Naive thymus-derived CD4-positive, alpha-beta T cell (primary cell): ENCODE measurements at regions of chr1 and their contacts with region 1.

Region 1: DNA sequence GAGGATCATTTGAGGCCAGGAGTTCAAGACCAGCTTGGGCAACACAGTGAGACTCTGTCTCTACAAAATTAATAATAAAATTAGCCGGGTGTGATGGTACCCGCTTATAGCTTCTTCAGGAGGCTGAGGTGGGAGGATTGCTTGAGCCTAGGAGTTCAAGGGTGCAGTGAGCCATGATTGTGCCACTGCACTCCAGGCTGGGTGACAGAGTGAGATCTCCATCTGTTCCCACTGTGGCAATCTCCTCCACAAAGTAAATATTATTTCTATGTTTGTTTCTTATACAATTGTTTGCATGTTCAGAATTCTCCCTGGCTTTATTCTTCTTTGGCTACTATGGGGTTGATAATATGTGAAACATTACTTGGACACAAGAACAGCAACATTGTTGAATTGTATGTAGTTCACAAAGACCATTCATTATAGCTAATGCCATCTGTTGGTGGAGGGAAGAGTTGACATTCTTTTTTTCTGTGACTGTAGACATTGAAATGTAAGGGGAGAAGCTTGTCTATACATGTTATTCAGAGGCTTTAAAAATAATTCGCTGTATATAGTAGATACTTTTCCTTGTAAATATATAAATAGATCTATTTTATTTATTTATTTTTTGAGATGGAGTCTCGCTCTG is 47.8 kb upstream of the SRSF10 start:
- DNase-seq: peak in 6 of 9 donors; percentile 4 to 45 (median 26)
- ATAC-seq: no peak
- H3K4me3 ChIP-seq: no peak overlapping the region
- H3K4me3 Mint-ChIP-seq: no peak overlapping the region
- H3K27ac ChIP-seq: no peak overlapping the region
- H3K27ac Mint-ChIP-seq: no peak overlapping the region
- H3K4me1 ChIP-seq: no peaks in the 10 kb centered on the region
- H3K4me1 Mint-ChIP-seq: peaks cover 0 to 8% (median 2%) of the 10 kb centered on the region in 7 donors
- H3K27me3 ChIP-seq: no peaks in the 10 kb centered on the region
- H3K27me3 Mint-ChIP-seq: peaks cover 0 to 2% (median 0%) of the 10 kb centered on the region in 5 donors

Region 2: GRCh38 chr1:23951571-23952095 is 76.3 kb before region 1 on chr1:
- CTCF ChIA-PET with region 1: no interaction called
- POLR2A ChIA-PET with region 1: no interaction called
- intact Hi-C with region 1: loop called in 1 of 2 experiments (anchors 1 kb)
- DNase-seq: no peak
- ATAC-seq: no peak
- H3K4me3 ChIP-seq: no peak overlapping the region
- H3K4me3 Mint-ChIP-seq: no peak overlapping the region
- H3K27ac ChIP-seq: no peak overlapping the region
- H3K27ac Mint-ChIP-seq: no peak overlapping the region
- H3K4me1 ChIP-seq: peaks cover 0 to 14% of the 10 kb centered on the region in 2 donors
- H3K4me1 Mint-ChIP-seq: peaks cover 8 to 25% (median 17%) of the 10 kb centered on the region in 7 donors
- H3K27me3 ChIP-seq: no peaks in the 10 kb centered on the region
- H3K27me3 Mint-ChIP-seq: peaks cover 0 to 7% (median 0%) of the 10 kb centered on the region in 5 donors

Region 3: DNA sequence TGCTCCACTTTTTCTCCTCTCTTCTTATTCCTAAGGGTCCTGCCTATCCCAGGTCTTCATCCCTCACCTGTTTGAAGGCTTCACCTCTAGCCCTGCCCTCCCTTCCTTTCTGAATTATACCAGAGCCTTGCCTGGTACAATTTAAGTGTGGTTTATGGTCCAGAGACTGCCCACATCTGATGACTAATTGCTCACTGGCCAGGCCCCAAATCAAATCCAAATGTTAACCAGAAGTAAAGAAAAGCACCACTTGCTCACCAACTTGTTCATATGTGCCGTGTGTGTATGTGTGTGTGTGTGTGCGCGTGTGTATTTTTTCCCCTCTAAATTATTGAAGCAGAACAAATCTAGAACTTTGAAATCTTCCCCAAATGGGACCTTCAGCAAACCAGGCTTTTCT is 57.6 kb after region 1 on chr1:
- CTCF ChIA-PET with region 1: no interaction called
- POLR2A ChIA-PET with region 1: no interaction called
- intact Hi-C with region 1: no loop called
- DNase-seq: no peak
- ATAC-seq: no peak
- H3K4me3 ChIP-seq: no peak overlapping the region
- H3K4me3 Mint-ChIP-seq: no peak overlapping the region
- H3K27ac ChIP-seq: no peak overlapping the region
- H3K27ac Mint-ChIP-seq: no peak overlapping the region
- H3K4me1 ChIP-seq: no peaks in the 10 kb centered on the region
- H3K4me1 Mint-ChIP-seq: peaks cover 0 to 3% (median 0%) of the 10 kb centered on the region in 7 donors
- H3K27me3 ChIP-seq: no peaks in the 10 kb centered on the region
- H3K27me3 Mint-ChIP-seq: peaks cover 0 to 5% (median 3%) of the 10 kb centered on the region in 5 donors

Region 4: GRCh38 chr1:24301785-24302175 is 273.8 kb after region 1 on chr1:
- CTCF ChIA-PET with region 1: no interaction called
- POLR2A ChIA-PET with region 1: no interaction called
- intact Hi-C with region 1: no loop called
- DNase-seq: no peak
- ATAC-seq: no peak
- H3K4me3 ChIP-seq: no peak overlapping the region
- H3K4me3 Mint-ChIP-seq: no peak overlapping the region
- H3K27ac ChIP-seq: no peak overlapping the region
- H3K27ac Mint-ChIP-seq: no peak overlapping the region
- H3K4me1 ChIP-seq: no peaks in the 10 kb centered on the region
- H3K4me1 Mint-ChIP-seq: no peaks in the 10 kb centered on the region
- H3K27me3 ChIP-seq: no peaks in the 10 kb centered on the region
- H3K27me3 Mint-ChIP-seq: peaks cover 8 to 62% (median 13%) of the 10 kb centered on the region in 5 donors

Region 5: DNA sequence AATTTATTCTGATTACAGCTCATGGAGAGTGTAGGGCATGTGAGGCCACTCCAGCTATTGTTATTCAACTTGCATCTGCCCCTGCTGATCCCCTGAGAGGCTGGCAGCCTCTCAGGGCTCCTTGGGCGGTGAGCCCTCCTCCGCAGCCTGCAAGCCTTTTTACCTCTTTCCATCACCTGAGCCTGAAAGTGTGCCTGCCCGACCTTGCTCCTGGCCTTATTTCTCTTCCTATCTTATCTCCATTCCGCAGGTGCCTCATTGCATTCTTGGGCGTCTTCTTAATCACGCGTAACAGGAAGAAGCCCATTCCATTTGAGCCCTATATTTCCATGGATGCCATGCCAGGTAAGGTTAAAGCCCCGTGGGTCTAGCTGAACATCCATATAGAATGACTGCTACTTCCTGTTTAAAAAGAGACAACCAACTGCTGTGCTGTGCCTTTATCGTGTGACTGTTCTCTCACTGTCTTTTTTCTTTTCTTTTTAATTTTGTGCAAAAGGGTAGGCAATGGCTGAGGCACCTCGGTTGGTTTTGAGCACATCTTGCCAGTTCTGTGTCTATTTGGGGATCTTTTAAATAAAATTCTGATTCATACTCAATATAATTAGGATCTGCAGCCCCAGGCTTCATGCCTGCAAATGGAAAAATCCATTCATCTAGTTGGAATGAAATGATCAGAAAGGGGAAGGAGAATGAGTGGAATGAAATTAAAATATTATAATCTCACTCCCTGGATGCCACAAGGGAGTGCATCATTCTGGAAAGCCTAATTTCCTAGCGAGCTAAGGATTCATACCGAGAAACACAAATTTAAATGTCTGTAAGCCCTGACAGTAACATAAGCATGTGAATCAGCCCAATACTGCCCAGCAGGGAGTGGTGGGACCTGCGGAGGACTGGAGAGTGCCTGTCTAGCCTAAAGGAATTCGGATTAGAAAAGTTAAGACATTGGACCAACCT is 436.1 kb after region 1 on chr1:
- CTCF ChIA-PET with region 1: no interaction called
- POLR2A ChIA-PET with region 1: no interaction called
- intact Hi-C with region 1: no loop called
- DNase-seq: peak in 6 of 9 donors; percentile 12 to 37 (median 31)
- ATAC-seq: no peak
- H3K4me3 ChIP-seq: no peak overlapping the region
- H3K4me3 Mint-ChIP-seq: peak overlapping the region in 8 of 10 donors; percentile 63 to 75 (median 68)
- H3K27ac ChIP-seq: peak overlapping the region; percentile 45
- H3K27ac Mint-ChIP-seq: peak overlapping the region; percentile 58 to 95 (median 86)
- H3K4me1 ChIP-seq: peaks cover 0 to 15% of the 10 kb centered on the region in 2 donors
- H3K4me1 Mint-ChIP-seq: peaks cover 21 to 65% (median 50%) of the 10 kb centered on the region in 7 donors
- H3K27me3 ChIP-seq: no peaks in the 10 kb centered on the region
- H3K27me3 Mint-ChIP-seq: no peaks in the 10 kb centered on the region